Heart left ventricle (tissue), 16 donors: ENCODE measurements at regions of chr4 and their contacts with region 1.

Region 1: GRCh38 chr4:124092541-124092984 is 620.0 kb downstream of the ANKRD50 start:
- DNase-seq: peak in 1 of 5 donors; percentile 39
- ATAC-seq: peak in 3 of 4 donors; percentile 43 to 68 (median 58)
- H3K4me3 ChIP-seq: no peak overlapping the region
- H3K27ac ChIP-seq: peak overlapping the region in 5 of 12 donors; percentile 15 to 56 (median 34)
- H3K4me1 ChIP-seq: peaks cover 0 to 19% (median 0%) of the 10 kb centered on the region in 12 donors
- H3K27me3 ChIP-seq: no peaks in the 10 kb centered on the region
- CTCF ChIP-seq: no peak
- POLR2A ChIP-seq: no peak

Region 2: DNA sequence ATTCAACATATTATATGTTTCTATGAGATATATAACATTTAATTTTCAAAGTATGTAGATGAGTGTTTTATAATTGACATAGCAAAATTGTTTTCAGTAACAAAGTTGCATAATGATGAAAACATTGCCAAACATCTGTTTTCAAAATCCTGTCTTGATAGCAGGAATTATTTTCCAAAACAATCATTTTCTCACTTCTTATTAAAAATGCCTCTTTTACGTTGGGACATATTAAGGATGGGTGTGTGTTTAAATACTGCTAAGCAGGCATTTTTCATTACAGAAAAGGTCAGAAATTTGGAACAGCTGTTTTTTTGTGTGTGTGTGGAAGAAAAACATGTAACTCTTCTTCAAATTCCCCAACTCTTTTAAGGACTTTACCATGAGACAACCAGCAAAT is 244.0 kb before region 1 on chr4:
- intact Hi-C with region 1: loop called in 1 of 10 experiments (anchors 10 kb)
- DNase-seq: no peak
- ATAC-seq: peak in 2 of 4 donors; percentile 31 to 37
- H3K4me3 ChIP-seq: no peak overlapping the region
- H3K27ac ChIP-seq: peak overlapping the region in 7 of 12 donors; percentile 39 to 74 (median 49)
- H3K4me1 ChIP-seq: peaks cover 0 to 12% (median 0%) of the 10 kb centered on the region in 12 donors
- H3K27me3 ChIP-seq: no peaks in the 10 kb centered on the region
- CTCF ChIP-seq: no peak
- POLR2A ChIP-seq: no peak

Region 3: GRCh38 chr4:124061413-124061812 is 31.1 kb before region 1 on chr4:
- intact Hi-C with region 1: no loop called
- DNase-seq: no peak
- ATAC-seq: peak; percentile 16 to 62 (median 36)
- H3K4me3 ChIP-seq: no peak overlapping the region
- H3K27ac ChIP-seq: peak overlapping the region; percentile 51 to 85 (median 80)
- H3K4me1 ChIP-seq: peaks cover 0 to 34% (median 23%) of the 10 kb centered on the region in 12 donors
- H3K27me3 ChIP-seq: no peaks in the 10 kb centered on the region
- CTCF ChIP-seq: no peak
- POLR2A ChIP-seq: no peak

Region 4: GRCh38 chr4:124262211-124263179 is 169.9 kb after region 1 on chr4:
- intact Hi-C with region 1: no loop called
- DNase-seq: peak in 4 of 5 donors; percentile 36 to 58 (median 51)
- ATAC-seq: peak in 3 of 4 donors; percentile 82 to 96 (median 87)
- H3K4me3 ChIP-seq: no peak overlapping the region
- H3K27ac ChIP-seq: peak overlapping the region in 1 of 12 donors; percentile 19
- H3K4me1 ChIP-seq: peaks cover 0 to 6% (median 0%) of the 10 kb centered on the region in 12 donors
- H3K27me3 ChIP-seq: no peaks in the 10 kb centered on the region
- CTCF ChIP-seq: peak; percentile 69 to 95 (median 84)
- POLR2A ChIP-seq: no peak